ENCODE measurements at regions of chr12 and their contacts with region 1.

Region 1: GRCh38 chr12:117874842-117875434 is 93.9 kb downstream of the KSR2 start:
- DNase-seq: peak; percentile 73
- H3K4me3 Mint-ChIP-seq: no peak overlapping the region
- H3K27ac Mint-ChIP-seq: peak overlapping the region; percentile 34
- H3K4me1 Mint-ChIP-seq: peaks cover 4% of the 10 kb centered on the region
- H3K27me3 Mint-ChIP-seq: peaks cover 26% of the 10 kb centered on the region

Region 2: GRCh38 chr12:117830471-117830870 is 44.5 kb before region 1 on chr12:
- CTCF ChIA-PET with region 1: no interaction called
- DNase-seq: no peak
- H3K4me3 Mint-ChIP-seq: no peak overlapping the region
- H3K27ac Mint-ChIP-seq: no peak overlapping the region
- H3K4me1 Mint-ChIP-seq: no peaks in the 10 kb centered on the region
- H3K27me3 Mint-ChIP-seq: peaks cover 3% of the 10 kb centered on the region

Region 3: DNA sequence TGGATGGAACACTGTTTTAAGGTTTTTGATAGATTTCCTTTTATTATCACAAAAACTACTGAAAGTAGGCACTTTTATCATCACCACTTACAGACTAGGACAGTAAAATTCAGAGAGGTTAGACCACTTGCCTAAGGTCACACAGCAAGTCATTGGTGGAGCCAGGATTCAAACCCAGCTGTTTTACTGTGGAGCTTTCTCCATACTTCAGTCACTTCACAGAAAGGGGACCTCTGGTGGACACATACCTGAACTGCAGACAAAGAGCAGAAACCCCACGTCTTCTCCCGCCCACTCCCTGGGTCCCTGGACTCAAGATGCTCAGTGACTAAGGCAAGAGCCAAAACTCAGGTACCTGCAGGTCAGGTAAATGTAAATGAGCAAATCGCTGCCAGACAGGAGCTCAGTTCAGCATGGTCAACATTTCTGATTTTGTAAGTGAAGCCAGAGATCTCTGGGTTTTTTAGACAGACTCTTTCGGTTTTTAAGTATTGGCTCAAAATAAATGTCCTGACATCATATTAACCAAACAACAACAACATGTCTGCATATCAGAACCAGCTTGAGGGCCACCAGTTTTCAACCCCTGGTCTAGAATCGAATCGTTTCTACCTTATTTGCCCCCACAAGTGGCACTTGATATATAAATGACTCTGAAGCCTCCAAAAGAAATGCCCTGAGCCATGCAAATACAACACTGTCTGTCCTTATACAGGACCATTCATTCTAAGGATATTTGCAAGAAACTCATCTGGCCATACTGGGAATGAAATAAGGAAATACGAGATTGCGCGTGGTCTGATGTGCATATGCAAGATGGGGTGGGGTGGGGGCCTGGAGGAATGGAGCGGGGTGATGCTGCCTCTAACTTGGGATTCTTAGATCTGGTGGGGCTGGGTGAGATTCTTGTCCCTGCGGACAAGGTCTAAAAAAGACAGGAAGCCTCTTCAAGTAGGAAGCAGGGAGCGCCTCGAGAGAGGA is 17.0 kb before region 1 on chr12:
- CTCF ChIA-PET with region 1: interaction called, 13 read pairs
- DNase-seq: peak; percentile 63
- H3K4me3 Mint-ChIP-seq: no peak overlapping the region
- H3K27ac Mint-ChIP-seq: no peak overlapping the region
- H3K4me1 Mint-ChIP-seq: no peaks in the 10 kb centered on the region
- H3K27me3 Mint-ChIP-seq: peaks cover 1% of the 10 kb centered on the region

Region 4: DNA sequence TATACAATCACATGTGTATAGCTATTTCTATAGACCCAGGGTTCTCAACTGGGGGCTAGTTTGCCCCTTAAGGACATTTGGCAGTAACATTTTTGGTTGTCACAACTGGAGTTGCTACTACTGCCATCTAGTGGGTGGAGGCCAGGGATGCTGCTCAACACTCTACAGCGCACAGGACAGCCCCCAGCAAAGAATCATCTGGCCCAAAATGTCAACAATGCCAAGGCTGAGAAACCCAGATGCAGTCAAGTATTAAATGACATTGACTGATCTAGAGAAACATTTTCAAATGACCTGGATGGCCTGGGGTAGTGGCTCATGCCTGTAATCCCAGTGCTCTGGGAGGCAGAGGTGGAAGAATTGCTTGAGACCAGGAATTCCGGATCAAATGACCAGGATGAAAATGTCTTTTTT is 180.2 kb after region 1 on chr12:
- CTCF ChIA-PET with region 1: interaction called, 14 read pairs
- DNase-seq: peak; percentile 82
- H3K4me3 Mint-ChIP-seq: no peak overlapping the region
- H3K27ac Mint-ChIP-seq: no peak overlapping the region
- H3K4me1 Mint-ChIP-seq: peaks cover 23% of the 10 kb centered on the region
- H3K27me3 Mint-ChIP-seq: no peaks in the 10 kb centered on the region

Measured in activated naive CD4-positive, alpha-beta T cell treated with anti-CD3 and anti-CD28 coated beads, Interleukin-2, amount 10 ng/mL, durations not matched to agents 7 days and 5 days (primary cell).